Mammary epithelial cell (primary cell): ENCODE measurements at regions of chr7 and their contacts with region 1.

Region 1: GRCh38 chr7:99729501-99730237 is 5.3 kb downstream of the CYP3A7 start:
- DNase-seq: peak; percentile 83
- H3K4me3 ChIP-seq: no peak overlapping the region
- H3K27ac ChIP-seq: peak overlapping the region; percentile 49
- H3K4me1 ChIP-seq: peaks cover 36% of the 10 kb centered on the region
- H3K27me3 ChIP-seq: no peaks in the 10 kb centered on the region
- CTCF ChIP-seq: no peak

Region 2: DNA sequence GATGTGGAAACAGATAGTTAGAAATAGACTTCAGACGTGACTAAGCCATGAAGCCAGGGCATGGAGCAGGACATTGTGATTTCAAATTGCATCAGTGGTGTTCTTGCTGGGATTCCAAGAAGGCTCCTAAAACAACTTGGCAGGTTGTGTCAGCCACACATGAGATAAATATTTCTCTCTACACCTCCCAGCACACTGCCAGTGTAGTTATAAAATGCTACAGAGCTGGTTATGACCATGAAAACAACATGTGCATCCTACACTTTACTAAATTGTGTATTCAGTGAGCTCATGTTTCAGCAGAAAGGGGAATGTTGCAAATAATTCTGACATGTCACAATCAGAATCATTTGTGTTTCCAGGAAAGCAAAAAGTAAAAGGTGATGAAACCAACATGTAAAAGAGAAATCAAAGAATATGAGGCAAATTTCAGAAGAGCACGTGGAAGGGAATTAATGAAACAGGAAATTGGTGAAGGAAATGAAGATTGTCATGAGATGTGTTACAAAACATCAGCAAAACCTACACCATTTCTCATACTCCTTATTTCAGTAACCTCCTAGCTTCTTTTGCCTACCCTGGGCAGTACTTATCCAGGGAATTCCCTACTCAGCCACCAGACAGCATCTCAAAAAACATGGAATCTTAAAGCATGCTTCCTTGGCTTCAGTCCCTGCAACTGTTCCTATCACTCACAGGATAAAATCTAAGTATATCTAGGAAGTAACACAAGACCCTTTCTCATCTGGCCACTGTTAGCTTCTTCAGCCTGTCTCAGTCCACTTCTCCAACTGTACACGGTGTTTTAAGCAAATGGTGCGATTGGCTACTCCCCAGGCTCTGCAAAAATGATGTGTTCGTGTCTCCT is 11.1 kb after region 1 on chr7:
- CTCF ChIA-PET with region 1: interaction called, 6 read pairs
- dilution Hi-C with region 1: no loop called
- in situ Hi-C with region 1: no loop called
- intact Hi-C with region 1: loop called (anchors 2 kb)
- DNase-seq: peak; percentile 70
- H3K4me3 ChIP-seq: no peak overlapping the region
- H3K27ac ChIP-seq: no peak overlapping the region
- H3K4me1 ChIP-seq: peaks cover 30% of the 10 kb centered on the region
- H3K27me3 ChIP-seq: no peaks in the 10 kb centered on the region
- CTCF ChIP-seq: no peak

Region 3: GRCh38 chr7:99794585-99795502 is 65.2 kb after region 1 on chr7:
- CTCF ChIA-PET with region 1: no interaction called
- dilution Hi-C with region 1: no loop called
- in situ Hi-C with region 1: no loop called
- intact Hi-C with region 1: loop called (anchors 5 kb)
- DNase-seq: no peak
- H3K4me3 ChIP-seq: no peak overlapping the region
- H3K27ac ChIP-seq: no peak overlapping the region
- H3K4me1 ChIP-seq: peaks cover 21% of the 10 kb centered on the region
- H3K27me3 ChIP-seq: no peaks in the 10 kb centered on the region
- CTCF ChIP-seq: no peak

Region 4: GRCh38 chr7:99837649-99838361 is 108.1 kb after region 1 on chr7:
- CTCF ChIA-PET with region 1: no interaction called
- dilution Hi-C with region 1: no loop called
- in situ Hi-C with region 1: no loop called
- intact Hi-C with region 1: loop called (anchors 10 kb)
- DNase-seq: peak; percentile 16
- H3K4me3 ChIP-seq: no peak overlapping the region
- H3K27ac ChIP-seq: no peak overlapping the region
- H3K4me1 ChIP-seq: peaks cover 3% of the 10 kb centered on the region
- H3K27me3 ChIP-seq: no peaks in the 10 kb centered on the region
- CTCF ChIP-seq: peak; percentile 25 to 61